Naive thymus-derived CD4-positive, alpha-beta T cell (primary cell): ENCODE measurements at regions of chr4 and their contacts with region 1.

Region 1: GRCh38 chr4:76023389-76023788 is at the start of gene CXCL10:
- DNase-seq: peak in 1 of 9 donors; percentile 2
- ATAC-seq: peak; percentile 54
- H3K4me3 ChIP-seq: no peak within 1 kb of the TSS
- H3K4me3 Mint-ChIP-seq: peak within 1 kb of the TSS in 1 of 10 donors; percentile 4
- H3K27ac ChIP-seq: no peak within 1 kb of the TSS
- H3K27ac Mint-ChIP-seq: peak within 1 kb of the TSS in 1 of 9 donors; percentile 21
- H3K4me1 ChIP-seq: no peaks in the 10 kb centered on the region
- H3K4me1 Mint-ChIP-seq: peaks cover 8 to 27% (median 22%) of the 10 kb centered on the region in 7 donors
- H3K27me3 ChIP-seq: no peaks in the 10 kb centered on the region
- H3K27me3 Mint-ChIP-seq: no peaks in the 10 kb centered on the region
- total RNA-seq, gene CXCL10: 0.32 to 2.3 TPM in 2 of 5 experiments, not detected in the others

Region 2: DNA sequence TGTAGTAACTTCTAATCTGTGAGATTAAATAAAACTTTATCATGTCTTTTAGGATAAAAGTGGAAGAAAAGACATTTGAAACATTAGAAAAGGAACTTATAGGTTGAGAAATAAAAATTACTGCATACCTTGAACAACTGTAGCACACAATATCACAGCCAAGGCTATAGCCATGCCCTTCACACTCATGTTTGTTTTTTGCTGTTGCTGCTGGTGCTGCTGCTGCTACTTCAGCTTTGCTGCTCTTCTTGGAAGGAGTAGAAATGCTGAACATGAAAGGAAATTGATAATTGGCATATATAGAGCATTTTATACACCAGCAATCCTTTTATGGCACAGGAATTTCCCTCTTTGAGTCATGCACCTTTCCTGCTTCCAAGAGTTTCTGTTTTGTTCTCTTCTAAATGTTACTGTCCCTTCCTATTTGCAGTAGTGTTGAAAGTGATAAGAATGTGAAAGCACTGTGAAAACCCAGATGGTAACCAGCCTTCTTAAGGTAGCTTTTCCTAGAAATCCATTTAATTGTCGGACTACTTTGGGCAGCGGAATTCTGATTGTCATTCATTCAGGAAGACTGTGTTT is 12.5 kb after region 1 on chr4 and contains the start of gene CXCL11:
- CTCF ChIA-PET with region 1: interaction called, 3 read pairs
- POLR2A ChIA-PET with region 1: no interaction called
- intact Hi-C with region 1: loop called in 1 of 2 experiments (anchors 2 kb)
- DNase-seq: no peak
- ATAC-seq: no peak
- H3K4me3 ChIP-seq: no peak within 1 kb of the TSS
- H3K4me3 Mint-ChIP-seq: no peak within 1 kb of the TSS
- H3K27ac ChIP-seq: no peak within 1 kb of the TSS
- H3K27ac Mint-ChIP-seq: no peak within 1 kb of the TSS
- H3K4me1 ChIP-seq: no peaks in the 10 kb centered on the region
- H3K4me1 Mint-ChIP-seq: peaks cover 0 to 14% (median 0%) of the 10 kb centered on the region in 7 donors
- H3K27me3 ChIP-seq: no peaks in the 10 kb centered on the region
- H3K27me3 Mint-ChIP-seq: peaks cover 0 to 4% (median 2%) of the 10 kb centered on the region in 5 donors
- total RNA-seq, gene CXCL11: not detected

Region 3: DNA sequence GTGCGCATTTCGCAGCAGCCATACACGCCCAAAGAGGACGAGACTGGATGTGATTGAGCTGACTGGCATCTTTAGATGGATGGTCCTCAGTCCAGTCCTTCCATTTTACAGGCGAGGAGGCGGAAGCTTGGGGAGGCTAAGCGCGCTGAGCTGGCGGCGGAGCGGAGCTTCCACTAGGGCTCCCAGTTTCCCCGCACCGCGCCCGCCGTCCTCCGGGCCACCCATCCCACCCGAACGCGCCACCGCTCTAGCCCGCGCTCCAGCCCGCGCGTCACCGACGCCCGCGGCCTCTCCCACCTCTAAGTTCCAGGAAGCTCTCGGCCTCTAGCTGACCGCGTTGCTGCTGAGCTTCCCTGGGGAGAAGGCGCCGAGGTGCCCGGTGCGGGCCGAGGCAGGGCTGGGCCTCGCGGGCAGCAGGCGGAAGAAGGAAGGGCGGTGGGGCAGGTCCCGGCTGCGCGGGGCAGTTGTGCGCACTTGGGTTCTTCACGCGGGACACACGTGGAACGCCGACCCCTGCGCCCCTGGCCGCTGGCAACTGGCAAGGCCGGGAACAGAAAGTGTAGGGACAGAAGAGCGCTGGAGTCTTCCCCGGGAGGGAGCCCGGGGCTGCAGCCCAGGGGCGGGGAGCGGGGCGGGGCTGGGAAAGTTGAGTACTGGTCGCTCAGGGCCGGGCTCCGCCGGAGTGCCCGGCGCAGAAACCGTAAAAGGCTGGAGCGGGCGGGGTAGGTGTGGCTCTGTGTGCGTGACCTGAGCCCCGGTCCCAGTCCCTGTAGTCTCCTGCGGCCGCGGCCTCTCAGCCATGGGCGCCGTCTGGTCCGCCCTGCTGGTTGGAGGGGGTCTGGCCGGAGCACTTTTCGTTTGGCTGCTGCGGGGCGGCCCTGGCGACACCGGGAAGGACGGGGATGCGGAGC is 282.8 kb after region 1 on chr4 and contains the start of gene STBD1:
- CTCF ChIA-PET with region 1: no interaction called
- POLR2A ChIA-PET with region 1: no interaction called
- intact Hi-C with region 1: no loop called
- DNase-seq: peak in 7 of 9 donors; percentile 5 to 54 (median 19)
- ATAC-seq: peak; percentile 68
- H3K4me3 ChIP-seq: peak within 1 kb of the TSS; percentile 62
- H3K4me3 Mint-ChIP-seq: peak within 1 kb of the TSS; percentile 75 to 92 (median 82)
- H3K27ac ChIP-seq: peak within 1 kb of the TSS; percentile 20
- H3K27ac Mint-ChIP-seq: peak within 1 kb of the TSS in 7 of 9 donors; percentile 22 to 83 (median 63)
- H3K4me1 ChIP-seq: peaks cover 18% of the 10 kb centered on the region in 2 donors
- H3K4me1 Mint-ChIP-seq: peaks cover 20 to 37% (median 32%) of the 10 kb centered on the region in 7 donors
- H3K27me3 ChIP-seq: no peaks in the 10 kb centered on the region
- H3K27me3 Mint-ChIP-seq: peaks cover 0 to 42% (median 5%) of the 10 kb centered on the region in 5 donors
- total RNA-seq, gene STBD1: 0.62 to 2.1 (median 0.85) TPM in 4 of 5 experiments, not detected in the other